Panc1 (cell line): ENCODE measurements at regions of chr1 and their contacts with region 1.

Region 1: DNA sequence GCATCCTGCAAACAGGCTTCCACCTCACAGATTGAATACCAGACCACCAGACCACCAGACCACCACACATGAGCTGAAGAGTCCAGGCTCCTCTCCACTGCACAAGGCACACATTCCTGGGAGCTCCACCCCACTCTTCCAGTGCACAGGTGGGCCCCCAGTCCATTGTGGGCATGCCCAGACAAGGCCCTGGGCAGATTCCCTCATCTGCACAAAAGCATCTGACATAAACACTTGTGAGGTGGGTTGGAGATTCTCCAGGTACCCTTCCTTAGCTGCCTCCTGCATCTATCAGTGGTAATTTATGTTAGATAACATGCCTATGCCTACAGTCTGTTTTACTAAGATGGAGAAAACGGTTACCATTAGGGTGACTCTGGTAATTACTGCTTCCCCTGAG is 11.6 kb upstream of the CTBS start:
- DNase-seq: no peak
- ATAC-seq: no peak
- H3K4me3 ChIP-seq: no peak overlapping the region
- H3K27ac ChIP-seq: no peak overlapping the region
- H3K4me1 ChIP-seq: no peaks in the 10 kb centered on the region
- H3K27me3 ChIP-seq: no peaks in the 10 kb centered on the region
- CTCF ChIP-seq: no peak

Region 2: GRCh38 chr1:83516369-83516768 is 1069.4 kb before region 1 on chr1:
- CTCF ChIA-PET with region 1: no interaction called
- POLR2A ChIA-PET with region 1: no interaction called
- in situ Hi-C with region 1: no loop called
- intact Hi-C with region 1: no loop called
- DNase-seq: no peak
- ATAC-seq: no peak
- H3K4me3 ChIP-seq: no peak overlapping the region
- H3K27ac ChIP-seq: no peak overlapping the region
- H3K4me1 ChIP-seq: no peaks in the 10 kb centered on the region
- H3K27me3 ChIP-seq: no peaks in the 10 kb centered on the region
- CTCF ChIP-seq: no peak

Region 3: DNA sequence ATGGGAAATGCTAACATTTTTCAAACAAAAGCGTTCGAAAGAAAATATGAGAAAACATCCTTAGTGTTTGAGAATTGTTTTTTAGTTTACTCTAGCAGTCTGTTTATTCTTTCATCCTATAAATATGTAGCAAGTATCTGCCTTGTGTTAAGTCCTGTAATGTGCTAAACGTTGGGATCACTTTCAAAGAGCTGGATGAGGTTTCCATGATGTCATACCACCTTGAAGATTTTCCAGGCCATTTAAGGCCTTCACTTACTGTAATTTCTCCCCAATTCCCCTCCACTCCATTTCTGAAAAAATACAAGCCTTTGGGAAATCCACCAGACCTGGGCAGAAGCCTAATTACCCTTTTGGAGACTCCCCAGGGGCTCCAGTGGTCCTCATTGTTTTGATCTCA is 12.6 kb after region 1 on chr1:
- CTCF ChIA-PET with region 1: no interaction called
- POLR2A ChIA-PET with region 1: interaction called, 16 read pairs
- in situ Hi-C with region 1: no loop called
- intact Hi-C with region 1: no loop called
- DNase-seq: no peak
- ATAC-seq: no peak
- H3K4me3 ChIP-seq: no peak overlapping the region
- H3K27ac ChIP-seq: peak overlapping the region; percentile 67
- H3K4me1 ChIP-seq: peaks cover 33% of the 10 kb centered on the region
- H3K27me3 ChIP-seq: no peaks in the 10 kb centered on the region
- CTCF ChIP-seq: no peak